ENCODE measurements at regions of chr3 and their contacts with region 1.

Region 1: DNA sequence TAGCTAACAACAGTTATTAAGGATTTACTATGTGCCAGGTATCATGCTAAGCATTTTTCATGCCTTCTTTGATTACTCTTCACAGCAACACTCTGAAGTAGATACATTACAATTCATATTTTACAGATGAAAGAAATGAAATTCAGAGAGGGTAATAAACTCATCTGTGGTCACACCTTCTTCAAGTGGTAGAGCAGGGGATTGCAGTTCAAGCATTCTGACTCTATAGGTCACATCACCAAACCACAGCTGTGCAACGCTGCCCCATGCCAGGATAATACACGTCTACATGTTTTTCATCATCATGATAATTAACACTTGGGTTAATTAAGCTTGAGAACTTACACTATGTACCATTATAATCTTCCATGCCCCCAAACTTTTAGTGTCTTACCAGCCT is 98.5 kb downstream of the LRRC3B start:
- DNase-seq: no peak
- H3K4me3 ChIP-seq: no peak overlapping the region
- H3K27ac ChIP-seq: no peak overlapping the region
- H3K4me1 ChIP-seq: peaks cover 0 to 2% (median 0%) of the 10 kb centered on the region in 4 experiments; a peak in 2 of 7 replicates
- H3K27me3 ChIP-seq: no peaks in the 10 kb centered on the region
- CTCF ChIP-seq: peak in 1 of 3 experiments; percentile 18; a peak in 1 of 4 replicates
- EP300 ChIP-seq: no peak
- POLR2A ChIP-seq: no peak
- RAD21 ChIP-seq: peak; percentile 23 to 35; a peak in 3 of 4 replicates

Region 2: DNA sequence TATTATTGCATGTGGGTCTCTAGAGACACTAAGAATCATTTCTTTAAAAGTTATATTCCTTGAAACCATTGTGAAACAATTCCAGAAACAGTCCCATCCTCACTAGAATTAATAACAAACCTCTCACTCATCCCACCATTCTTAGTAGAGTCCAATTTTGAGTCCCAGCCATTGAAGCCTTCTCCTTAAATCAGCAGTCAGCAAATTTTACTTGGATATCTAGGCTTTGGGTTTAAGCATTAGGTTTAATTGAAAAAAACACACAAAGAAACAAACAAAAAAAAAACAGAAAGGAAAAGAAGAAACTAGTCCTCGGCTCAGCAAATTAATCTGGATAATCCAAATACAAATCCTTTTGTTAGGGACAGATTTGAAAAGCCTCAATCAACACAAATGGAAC is 10.8 kb after region 1 on chr3:
- CTCF ChIA-PET with region 1: interaction called, 11 read pairs
- POLR2A ChIA-PET with region 1: no interaction called
- DNase-seq: no peak
- H3K4me3 ChIP-seq: no peak overlapping the region
- H3K27ac ChIP-seq: no peak overlapping the region
- H3K4me1 ChIP-seq: no peaks in the 10 kb centered on the region
- H3K27me3 ChIP-seq: no peaks in the 10 kb centered on the region
- CTCF ChIP-seq: no peak
- EP300 ChIP-seq: no peak
- POLR2A ChIP-seq: no peak
- RAD21 ChIP-seq: no peak

Measured in H1 (cell line).